ENCODE measurements at regions of chr12 and their contacts with region 1.

Region 1: DNA sequence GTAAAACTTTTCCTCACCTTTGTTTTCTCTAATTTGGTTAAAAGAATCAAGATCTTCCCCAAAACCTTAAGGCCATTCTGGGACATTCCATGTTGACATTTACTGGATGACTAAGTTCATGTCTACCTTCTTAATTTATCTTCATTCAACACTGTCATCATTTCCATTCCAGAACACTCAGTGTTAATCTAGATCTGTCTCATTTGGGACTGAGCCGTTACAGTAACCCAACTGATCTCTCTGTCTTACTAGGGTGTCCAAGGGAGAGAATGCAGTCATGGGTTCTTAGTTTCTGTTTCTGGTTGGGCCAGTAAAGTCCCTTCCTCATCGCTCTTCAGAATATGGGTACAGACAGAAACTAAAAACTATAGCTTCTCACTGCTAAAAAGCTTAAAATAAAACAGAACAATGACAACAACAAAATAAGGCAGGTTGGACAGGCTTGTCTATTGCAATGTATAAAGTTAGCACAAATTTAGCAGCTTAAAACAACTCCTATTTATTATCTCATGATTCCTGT is 144.8 kb downstream of the ASCL1 start:
- DNase-seq: no peak
- ATAC-seq: no peak
- H3K4me3 ChIP-seq: no peak overlapping the region
- H3K27ac ChIP-seq: no peak overlapping the region
- H3K4me1 ChIP-seq: no peaks in the 10 kb centered on the region
- H3K27me3 ChIP-seq: no peaks in the 10 kb centered on the region
- CTCF ChIP-seq: no peak
- POLR2A ChIP-seq: no peak
- RAD21 ChIP-seq: no peak

Region 2: GRCh38 chr12:103085541-103085940 is 16.7 kb before region 1 on chr12:
- CTCF ChIA-PET with region 1: no interaction called
- POLR2A ChIA-PET with region 1: no interaction called
- dilution Hi-C with region 1: no loop called
- in situ Hi-C with region 1: no loop called
- intact Hi-C with region 1: loop called (anchors 1 kb)
- DNase-seq: no peak
- ATAC-seq: no peak
- H3K4me3 ChIP-seq: no peak overlapping the region
- H3K27ac ChIP-seq: no peak overlapping the region
- H3K4me1 ChIP-seq: no peaks in the 10 kb centered on the region
- H3K27me3 ChIP-seq: no peaks in the 10 kb centered on the region
- CTCF ChIP-seq: no peak
- POLR2A ChIP-seq: no peak
- RAD21 ChIP-seq: no peak

Region 3: DNA sequence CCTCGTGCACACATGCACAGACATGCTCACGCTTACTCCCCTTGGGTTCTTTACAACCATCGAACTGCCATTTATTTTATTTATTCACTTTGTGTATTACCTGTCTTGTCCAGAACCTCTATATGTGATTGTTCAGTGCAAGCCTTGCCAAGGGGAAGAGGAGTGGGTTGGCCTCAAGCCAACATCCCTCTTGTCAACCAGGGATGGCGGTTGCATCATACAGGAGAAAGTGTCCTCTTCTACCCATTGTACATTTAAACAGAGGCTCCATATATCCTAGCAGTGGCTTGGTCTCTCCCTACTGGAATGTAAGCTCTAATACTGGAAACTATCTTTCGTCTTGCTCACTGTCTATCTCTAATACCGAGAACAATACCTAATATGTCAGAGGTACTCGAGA is 285.1 kb after region 1 on chr12:
- CTCF ChIA-PET with region 1: no interaction called
- POLR2A ChIA-PET with region 1: no interaction called
- dilution Hi-C with region 1: no loop called
- in situ Hi-C with region 1: no loop called
- intact Hi-C with region 1: no loop called
- DNase-seq: no peak
- ATAC-seq: no peak
- H3K4me3 ChIP-seq: no peak overlapping the region
- H3K27ac ChIP-seq: no peak overlapping the region
- H3K4me1 ChIP-seq: no peaks in the 10 kb centered on the region
- H3K27me3 ChIP-seq: no peaks in the 10 kb centered on the region
- CTCF ChIP-seq: no peak
- POLR2A ChIP-seq: no peak
- RAD21 ChIP-seq: no peak